CD8-positive, alpha-beta T cell (primary cell): ENCODE measurements at regions of chr9 and their contacts with region 1.

Region 1: GRCh38 chr9:88388172-88388885 is at the start of gene SPIN1:
- DNase-seq: peak; percentile 76 to 94 (median 86)
- ATAC-seq: peak; percentile 72
- H3K4me3 ChIP-seq: peak within 1 kb of the TSS; percentile 68 to 82
- H3K4me3 Mint-ChIP-seq: peak within 1 kb of the TSS; percentile 98
- H3K27ac ChIP-seq: peak within 1 kb of the TSS; percentile 48 to 67
- H3K27ac Mint-ChIP-seq: peak within 1 kb of the TSS; percentile 96
- H3K4me1 ChIP-seq: peaks cover 11% of the 10 kb centered on the region
- H3K4me1 Mint-ChIP-seq: peaks cover 39% of the 10 kb centered on the region
- H3K27me3 ChIP-seq: no peaks in the 10 kb centered on the region
- H3K27me3 Mint-ChIP-seq: no peaks in the 10 kb centered on the region
- CTCF ChIP-seq: no peak
- total RNA-seq, gene SPIN1: 29.5 to 31.1 TPM

Region 2: DNA sequence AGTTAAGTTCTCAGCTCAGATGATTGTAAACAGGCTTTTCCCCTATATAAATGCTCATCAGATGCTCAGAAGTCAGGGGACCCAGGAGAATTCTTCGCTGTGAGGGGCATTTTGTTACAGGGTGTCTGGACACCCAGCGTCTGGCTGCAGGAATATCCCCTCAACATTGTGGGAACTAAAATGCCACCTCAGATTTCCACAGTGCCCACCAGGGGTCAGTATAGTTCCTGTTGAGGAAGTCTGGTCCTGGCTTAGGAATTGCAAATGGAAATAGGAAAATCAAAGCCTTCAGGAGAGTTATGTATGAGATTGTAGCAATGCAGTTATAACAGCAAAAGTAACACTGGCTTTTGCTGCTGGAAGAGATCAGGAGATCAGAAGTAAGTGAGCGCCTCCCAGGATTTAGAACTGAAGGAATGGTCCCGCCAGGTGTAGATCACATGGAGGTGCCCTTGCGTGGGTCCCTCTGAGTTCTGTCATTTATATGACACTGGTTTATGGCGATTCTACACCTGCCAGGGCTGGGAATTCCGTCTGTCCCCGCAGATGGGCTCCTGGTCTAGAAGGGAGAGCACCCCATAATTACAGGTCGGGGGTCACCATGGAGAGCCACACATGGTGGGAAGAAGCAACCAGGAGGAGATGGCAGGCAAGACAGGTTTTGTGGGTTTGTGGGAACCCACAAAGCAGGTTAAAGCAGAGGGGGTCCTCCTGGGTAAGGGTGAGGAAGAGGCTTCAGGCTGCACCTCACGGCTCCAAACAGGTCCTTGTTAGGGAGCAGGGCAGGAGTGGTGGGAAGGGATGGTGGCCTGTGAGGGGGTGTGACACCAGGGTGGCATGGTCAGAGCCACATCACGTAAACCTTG is 709.4 kb before region 1 on chr9:
- CTCF ChIA-PET with region 1: no interaction called
- POLR2A ChIA-PET with region 1: no interaction called
- intact Hi-C with region 1: no loop called
- DNase-seq: peak in 5 of 9 experiments; percentile 18 to 48 (median 29)
- ATAC-seq: no peak
- H3K4me3 ChIP-seq: no peak overlapping the region
- H3K4me3 Mint-ChIP-seq: no peak overlapping the region
- H3K27ac ChIP-seq: no peak overlapping the region
- H3K27ac Mint-ChIP-seq: no peak overlapping the region
- H3K4me1 ChIP-seq: no peaks in the 10 kb centered on the region
- H3K4me1 Mint-ChIP-seq: no peaks in the 10 kb centered on the region
- H3K27me3 ChIP-seq: no peaks in the 10 kb centered on the region
- H3K27me3 Mint-ChIP-seq: no peaks in the 10 kb centered on the region
- CTCF ChIP-seq: peak; percentile 36

Region 3: DNA sequence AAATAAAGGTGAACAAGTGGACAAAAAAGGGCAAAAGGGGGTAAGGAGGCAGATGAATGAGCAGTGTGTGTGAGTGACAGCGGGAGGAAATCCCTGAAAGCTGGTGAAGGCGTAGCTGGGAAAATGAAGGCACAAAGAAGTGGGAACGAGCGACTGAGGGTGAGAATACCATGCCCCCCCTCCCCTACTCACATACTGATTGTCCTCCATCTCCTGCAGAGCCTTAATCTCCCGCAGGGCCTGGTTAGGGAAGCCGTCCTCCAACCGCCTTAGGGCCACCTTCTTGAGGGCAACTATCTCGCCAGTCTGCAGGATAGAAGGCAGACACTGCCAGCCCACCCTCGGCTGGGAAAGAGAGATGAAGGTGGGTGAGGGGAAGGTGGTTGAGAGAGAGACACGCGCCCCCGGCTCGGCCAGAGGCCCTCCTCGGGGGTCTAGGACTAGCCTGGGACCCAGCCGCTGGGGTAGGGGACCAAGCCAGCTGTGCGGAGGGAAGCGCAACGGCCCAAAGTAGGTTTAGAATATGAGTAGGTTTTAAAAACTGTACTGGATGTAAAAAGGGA is 414.5 kb before region 1 on chr9:
- CTCF ChIA-PET with region 1: no interaction called
- POLR2A ChIA-PET with region 1: no interaction called
- intact Hi-C with region 1: loop called in 1 of 2 experiments (anchors 1 kb)
- DNase-seq: no peak
- ATAC-seq: no peak
- H3K4me3 ChIP-seq: peak overlapping the region; percentile 81 to 83
- H3K4me3 Mint-ChIP-seq: peak overlapping the region; percentile 97
- H3K27ac ChIP-seq: peak overlapping the region; percentile 86 to 92
- H3K27ac Mint-ChIP-seq: peak overlapping the region; percentile 99
- H3K4me1 ChIP-seq: peaks cover 10% of the 10 kb centered on the region
- H3K4me1 Mint-ChIP-seq: peaks cover 30% of the 10 kb centered on the region
- H3K27me3 ChIP-seq: no peaks in the 10 kb centered on the region
- H3K27me3 Mint-ChIP-seq: no peaks in the 10 kb centered on the region
- CTCF ChIP-seq: no peak

Region 4: GRCh38 chr9:88173378-88173999 is 214.8 kb before region 1 on chr9:
- CTCF ChIA-PET with region 1: interaction called, 3 read pairs
- POLR2A ChIA-PET with region 1: no interaction called
- intact Hi-C with region 1: loop called in 1 of 2 experiments (anchors 2 kb)
- DNase-seq: peak; percentile 16 to 80 (median 60)
- ATAC-seq: peak; percentile 58
- H3K4me3 ChIP-seq: no peak overlapping the region
- H3K4me3 Mint-ChIP-seq: no peak overlapping the region
- H3K27ac ChIP-seq: no peak overlapping the region
- H3K27ac Mint-ChIP-seq: no peak overlapping the region
- H3K4me1 ChIP-seq: no peaks in the 10 kb centered on the region
- H3K4me1 Mint-ChIP-seq: peaks cover 1% of the 10 kb centered on the region
- H3K27me3 ChIP-seq: no peaks in the 10 kb centered on the region
- H3K27me3 Mint-ChIP-seq: peaks cover 2% of the 10 kb centered on the region
- CTCF ChIP-seq: peak; percentile 80

Region 5: GRCh38 chr9:88322906-88323566 is 65.3 kb before region 1 on chr9:
- CTCF ChIA-PET with region 1: no interaction called
- POLR2A ChIA-PET with region 1: no interaction called
- intact Hi-C with region 1: loop called (anchors 2 to 5 kb)
- DNase-seq: peak; percentile 24 to 90 (median 61)
- ATAC-seq: peak; percentile 98
- H3K4me3 ChIP-seq: peak overlapping the region in 1 of 2 experiments; percentile 20
- H3K4me3 Mint-ChIP-seq: peak overlapping the region; percentile 62
- H3K27ac ChIP-seq: peak overlapping the region in 1 of 2 experiments; percentile 40
- H3K27ac Mint-ChIP-seq: peak overlapping the region; percentile 89
- H3K4me1 ChIP-seq: peaks cover 34% of the 10 kb centered on the region
- H3K4me1 Mint-ChIP-seq: peaks cover 38% of the 10 kb centered on the region
- H3K27me3 ChIP-seq: no peaks in the 10 kb centered on the region
- H3K27me3 Mint-ChIP-seq: no peaks in the 10 kb centered on the region
- CTCF ChIP-seq: no peak

Region 6: GRCh38 chr9:88593537-88594185 is 205.3 kb after region 1 on chr9:
- CTCF ChIA-PET with region 1: no interaction called
- POLR2A ChIA-PET with region 1: no interaction called
- intact Hi-C with region 1: no loop called
- DNase-seq: peak; percentile 13 to 69 (median 50)
- ATAC-seq: peak; percentile 64
- H3K4me3 ChIP-seq: no peak overlapping the region
- H3K4me3 Mint-ChIP-seq: no peak overlapping the region
- H3K27ac ChIP-seq: no peak overlapping the region
- H3K27ac Mint-ChIP-seq: no peak overlapping the region
- H3K4me1 ChIP-seq: no peaks in the 10 kb centered on the region
- H3K4me1 Mint-ChIP-seq: peaks cover 4% of the 10 kb centered on the region
- H3K27me3 ChIP-seq: no peaks in the 10 kb centered on the region
- H3K27me3 Mint-ChIP-seq: peaks cover 19% of the 10 kb centered on the region
- CTCF ChIP-seq: peak; percentile 71

Region 7: DNA sequence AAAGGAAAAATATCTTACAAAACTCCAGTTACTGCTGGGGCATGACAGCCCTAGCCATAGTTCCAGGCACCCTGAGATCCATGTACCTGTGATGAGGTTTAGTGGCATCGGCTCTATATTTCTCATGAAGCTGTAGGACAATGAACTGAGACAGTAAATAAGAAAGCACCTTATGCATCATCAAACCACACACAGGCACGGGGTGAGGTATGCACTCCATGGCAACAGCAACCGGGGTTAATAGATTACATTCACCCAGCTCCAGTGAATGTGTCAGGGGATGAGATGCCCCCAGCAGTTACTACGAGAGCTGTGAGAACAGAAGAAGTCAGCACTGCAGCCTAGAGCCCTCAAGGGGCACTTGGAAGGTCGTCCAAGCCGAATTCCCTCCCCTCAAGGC is 440.9 kb after region 1 on chr9:
- CTCF ChIA-PET with region 1: no interaction called
- POLR2A ChIA-PET with region 1: no interaction called
- intact Hi-C with region 1: no loop called
- DNase-seq: no peak
- ATAC-seq: peak; percentile 31
- H3K4me3 ChIP-seq: no peak overlapping the region
- H3K4me3 Mint-ChIP-seq: no peak overlapping the region
- H3K27ac ChIP-seq: no peak overlapping the region
- H3K27ac Mint-ChIP-seq: no peak overlapping the region
- H3K4me1 ChIP-seq: peaks cover 5% of the 10 kb centered on the region
- H3K4me1 Mint-ChIP-seq: peaks cover 8% of the 10 kb centered on the region
- H3K27me3 ChIP-seq: peaks cover 3 to 25% of the 10 kb centered on the region in 2 experiments
- H3K27me3 Mint-ChIP-seq: peaks cover 69% of the 10 kb centered on the region
- CTCF ChIP-seq: no peak

Region 8: GRCh38 chr9:89310475-89311346 is 922.4 kb after region 1 on chr9 and contains the start of gene CKS2:
- CTCF ChIA-PET with region 1: no interaction called
- POLR2A ChIA-PET with region 1: no interaction called
- intact Hi-C with region 1: loop called in 1 of 2 experiments (anchors 5 kb)
- DNase-seq: peak; percentile 99 to 100 (median 100)
- ATAC-seq: peak; percentile 92
- H3K4me3 ChIP-seq: peak within 1 kb of the TSS; percentile 50 to 72
- H3K4me3 Mint-ChIP-seq: peak within 1 kb of the TSS; percentile 97
- H3K27ac ChIP-seq: peak within 1 kb of the TSS; percentile 91 to 100
- H3K27ac Mint-ChIP-seq: peak within 1 kb of the TSS; percentile 97
- H3K4me1 ChIP-seq: peaks cover 24% of the 10 kb centered on the region
- H3K4me1 Mint-ChIP-seq: peaks cover 44% of the 10 kb centered on the region
- H3K27me3 ChIP-seq: no peaks in the 10 kb centered on the region
- H3K27me3 Mint-ChIP-seq: no peaks in the 10 kb centered on the region
- CTCF ChIP-seq: no peak
- total RNA-seq, gene CKS2: 8.4 to 9.3 TPM